Left ventricle myocardium inferior (tissue), 1 donor: ENCODE measurements at regions of chr2 and their contacts with region 1.

Region 1: GRCh38 chr2:55168221-55169154 is 63.6 kb downstream of the CLHC1 start:
- DNase-seq: no peak
- H3K4me3 ChIP-seq: no peak overlapping the region
- H3K27ac ChIP-seq: peak overlapping the region; percentile 36
- H3K4me1 ChIP-seq: peaks cover 20% of the 10 kb centered on the region
- H3K27me3 ChIP-seq: no peaks in the 10 kb centered on the region
- CTCF ChIP-seq: peak; percentile 76

Region 2: GRCh38 chr2:55010149-55010591 is 158.3 kb before region 1 on chr2:
- intact Hi-C with region 1: loop called (anchors 10 kb)
- DNase-seq: no peak
- H3K4me3 ChIP-seq: peak overlapping the region; percentile 52
- H3K27ac ChIP-seq: peak overlapping the region; percentile 36
- H3K4me1 ChIP-seq: peaks cover 92% of the 10 kb centered on the region
- H3K27me3 ChIP-seq: no peaks in the 10 kb centered on the region
- CTCF ChIP-seq: no peak